Caco-2 (cell line): ENCODE measurements at regions of chr9 and their contacts with region 1.

Region 1: GRCh38 chr9:33159760-33160127 is 7.4 kb downstream of the B4GALT1 start:
- DNase-seq: no peak
- H3K4me3 ChIP-seq: no peak overlapping the region
- H3K4me3 Mint-ChIP-seq: peak overlapping the region; percentile 39
- H3K27ac Mint-ChIP-seq: peak overlapping the region; percentile 81
- H3K4me1 ChIP-seq: peaks cover 91% of the 10 kb centered on the region
- H3K4me1 Mint-ChIP-seq: peaks cover 75% of the 10 kb centered on the region
- H3K27me3 ChIP-seq: no peaks in the 10 kb centered on the region
- H3K27me3 Mint-ChIP-seq: no peaks in the 10 kb centered on the region
- CTCF ChIP-seq: no peak

Region 2: GRCh38 chr9:33032865-33033264 is 126.9 kb before region 1 on chr9:
- CTCF ChIA-PET with region 1: no interaction called
- POLR2A ChIA-PET with region 1: no interaction called
- intact Hi-C with region 1: loop called (anchors 5 kb)
- DNase-seq: peak in 1 of 2 experiments; percentile 58
- H3K4me3 ChIP-seq: no peak overlapping the region
- H3K4me3 Mint-ChIP-seq: no peak overlapping the region
- H3K27ac Mint-ChIP-seq: peak overlapping the region; percentile 57
- H3K4me1 ChIP-seq: peaks cover 45% of the 10 kb centered on the region
- H3K4me1 Mint-ChIP-seq: no peaks in the 10 kb centered on the region
- H3K27me3 ChIP-seq: no peaks in the 10 kb centered on the region
- H3K27me3 Mint-ChIP-seq: no peaks in the 10 kb centered on the region
- CTCF ChIP-seq: no peak

Region 3: DNA sequence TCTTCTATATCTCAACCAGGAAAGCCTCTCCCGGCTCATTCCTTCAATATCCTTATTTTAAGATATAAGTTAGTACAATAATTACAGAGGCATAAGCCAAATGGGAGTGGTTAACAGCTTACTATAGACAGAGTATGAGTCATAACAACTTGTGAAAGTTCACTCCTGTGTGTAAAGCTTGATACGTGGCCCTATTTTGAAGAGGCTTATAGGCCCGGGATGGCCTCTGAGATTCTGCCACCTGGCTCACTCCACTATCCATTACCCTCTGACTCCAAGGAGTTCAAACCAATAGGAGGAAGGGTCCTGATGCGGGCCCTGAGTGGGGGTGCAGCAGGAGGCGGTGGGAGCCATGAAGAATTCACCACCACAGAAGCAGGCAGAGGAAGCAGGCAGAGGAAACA is 29.2 kb before region 1 on chr9:
- CTCF ChIA-PET with region 1: interaction called, 3 read pairs
- POLR2A ChIA-PET with region 1: no interaction called
- intact Hi-C with region 1: loop called (anchors 1 kb)
- DNase-seq: no peak
- H3K4me3 ChIP-seq: no peak overlapping the region
- H3K4me3 Mint-ChIP-seq: peak overlapping the region; percentile 50
- H3K27ac Mint-ChIP-seq: peak overlapping the region; percentile 97
- H3K4me1 ChIP-seq: peaks cover 68% of the 10 kb centered on the region
- H3K4me1 Mint-ChIP-seq: peaks cover 59% of the 10 kb centered on the region
- H3K27me3 ChIP-seq: no peaks in the 10 kb centered on the region
- H3K27me3 Mint-ChIP-seq: no peaks in the 10 kb centered on the region
- CTCF ChIP-seq: no peak

Region 4: DNA sequence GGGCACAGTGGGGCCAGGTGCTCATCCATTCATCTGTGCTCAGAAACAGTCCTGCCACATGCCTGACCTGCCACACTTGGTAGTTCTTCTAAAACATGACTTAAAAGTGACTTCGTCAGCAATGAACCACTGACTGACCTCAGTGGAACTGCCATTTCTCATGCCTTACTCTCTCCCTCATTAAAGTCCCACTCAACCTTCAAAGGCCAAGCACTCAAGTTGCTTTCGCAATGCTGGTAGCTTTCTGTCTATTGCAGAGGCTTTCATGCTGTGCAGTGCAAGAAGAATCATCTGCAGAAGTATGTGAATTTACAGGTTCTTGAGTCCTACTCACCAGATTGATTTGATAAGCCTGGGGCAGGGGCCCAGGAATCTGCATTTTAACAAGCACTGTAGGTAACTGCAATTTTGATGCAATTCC is 16.5 kb before region 1 on chr9:
- CTCF ChIA-PET with region 1: interaction called, 6 read pairs
- POLR2A ChIA-PET with region 1: no interaction called
- intact Hi-C with region 1: loop called (anchors 1 kb)
- DNase-seq: peak; percentile 56 to 64
- H3K4me3 ChIP-seq: no peak overlapping the region
- H3K4me3 Mint-ChIP-seq: no peak overlapping the region
- H3K27ac Mint-ChIP-seq: peak overlapping the region; percentile 39
- H3K4me1 ChIP-seq: peaks cover 45% of the 10 kb centered on the region
- H3K4me1 Mint-ChIP-seq: peaks cover 17% of the 10 kb centered on the region
- H3K27me3 ChIP-seq: no peaks in the 10 kb centered on the region
- H3K27me3 Mint-ChIP-seq: no peaks in the 10 kb centered on the region
- CTCF ChIP-seq: no peak

Region 5: GRCh38 chr9:33172256-33173238 is 12.8 kb after region 1 on chr9:
- CTCF ChIA-PET with region 1: interaction called, 3 read pairs
- POLR2A ChIA-PET with region 1: interaction called, 15 read pairs
- intact Hi-C with region 1: loop called (anchors 1 kb)
- DNase-seq: peak; percentile 72 to 82
- H3K4me3 ChIP-seq: no peak overlapping the region
- H3K4me3 Mint-ChIP-seq: peak overlapping the region; percentile 51
- H3K27ac Mint-ChIP-seq: peak overlapping the region; percentile 95
- H3K4me1 ChIP-seq: peaks cover 50% of the 10 kb centered on the region
- H3K4me1 Mint-ChIP-seq: peaks cover 49% of the 10 kb centered on the region
- H3K27me3 ChIP-seq: no peaks in the 10 kb centered on the region
- H3K27me3 Mint-ChIP-seq: no peaks in the 10 kb centered on the region
- CTCF ChIP-seq: no peak